H1 (cell line): ENCODE measurements at regions of chr7 and their contacts with region 1.

Region 1: GRCh38 chr7:134355927-134356326 is 39.2 kb upstream of the SLC35B4 start:
- DNase-seq: no peak
- H3K4me3 ChIP-seq: no peak overlapping the region
- H3K27ac ChIP-seq: no peak overlapping the region
- H3K4me1 ChIP-seq: no peaks in the 10 kb centered on the region
- H3K27me3 ChIP-seq: no peaks in the 10 kb centered on the region
- CTCF ChIP-seq: no peak
- EP300 ChIP-seq: no peak
- POLR2A ChIP-seq: no peak
- RAD21 ChIP-seq: no peak

Region 2: GRCh38 chr7:134316539-134317344 is 39.2 kb before region 1 on chr7 and contains the start of gene SLC35B4:
- CTCF ChIA-PET with region 1: interaction called, 11 read pairs
- POLR2A ChIA-PET with region 1: no interaction called
- DNase-seq: peak; percentile 93 to 98
- H3K4me3 ChIP-seq: peak within 1 kb of the TSS; percentile 84 to 94 (median 88)
- H3K27ac ChIP-seq: peak within 1 kb of the TSS; percentile 54; the same call in 1 of the 2 replicates
- H3K4me1 ChIP-seq: no peaks in the 10 kb centered on the region; a peak in 1 of 7 replicates
- H3K27me3 ChIP-seq: no peaks in the 10 kb centered on the region
- CTCF ChIP-seq: peak in 1 of 3 experiments; percentile 49; a peak in 1 of 4 replicates
- EP300 ChIP-seq: no peak
- POLR2A ChIP-seq: peak in 1 of 2 experiments; percentile 80; a peak in 2 of 3 replicates
- RAD21 ChIP-seq: peak; percentile 1 to 2; a peak in 1 of 4 replicates
- total RNA-seq, gene SLC35B4: 34.6 and 41.5 TPM in 2 replicates

Region 3: GRCh38 chr7:134337980-134338379 is 17.9 kb before region 1 on chr7:
- CTCF ChIA-PET with region 1: interaction called, 13 read pairs
- POLR2A ChIA-PET with region 1: no interaction called
- DNase-seq: no peak
- H3K4me3 ChIP-seq: no peak overlapping the region
- H3K27ac ChIP-seq: no peak overlapping the region
- H3K4me1 ChIP-seq: no peaks in the 10 kb centered on the region
- H3K27me3 ChIP-seq: no peaks in the 10 kb centered on the region
- CTCF ChIP-seq: no peak
- EP300 ChIP-seq: no peak
- POLR2A ChIP-seq: no peak
- RAD21 ChIP-seq: no peak

Region 4: GRCh38 chr7:134374291-134374690 is 18.4 kb after region 1 on chr7:
- CTCF ChIA-PET with region 1: interaction called, 12 read pairs
- POLR2A ChIA-PET with region 1: no interaction called
- DNase-seq: no peak
- H3K4me3 ChIP-seq: no peak overlapping the region
- H3K27ac ChIP-seq: no peak overlapping the region
- H3K4me1 ChIP-seq: no peaks in the 10 kb centered on the region
- H3K27me3 ChIP-seq: no peaks in the 10 kb centered on the region
- CTCF ChIP-seq: no peak
- EP300 ChIP-seq: no peak
- POLR2A ChIP-seq: no peak
- RAD21 ChIP-seq: no peak

Region 5: GRCh38 chr7:134420424-134421125 is 64.6 kb after region 1 on chr7:
- CTCF ChIA-PET with region 1: interaction called, 20 read pairs
- POLR2A ChIA-PET with region 1: no interaction called
- DNase-seq: peak in 1 of 2 experiments; percentile 65
- H3K4me3 ChIP-seq: no peak overlapping the region
- H3K27ac ChIP-seq: no peak overlapping the region
- H3K4me1 ChIP-seq: no peaks in the 10 kb centered on the region
- H3K27me3 ChIP-seq: no peaks in the 10 kb centered on the region
- CTCF ChIP-seq: peak in 2 of 3 experiments; percentile 73 to 80; a peak in 3 of 4 replicates
- EP300 ChIP-seq: no peak
- POLR2A ChIP-seq: no peak
- RAD21 ChIP-seq: peak; percentile 87 to 96